Heart right ventricle (tissue), 16 donors: ENCODE measurements at regions of chr2 and their contacts with region 1.

Region 1: GRCh38 chr2:102005989-102006885 is 14.5 kb downstream of the IL1R2 start:
- DNase-seq: peak in 1 of 2 donors; percentile 51
- ATAC-seq: peak; percentile 39 to 82 (median 72)
- H3K4me3 ChIP-seq: no peak overlapping the region
- H3K27ac ChIP-seq: peak overlapping the region in 1 of 10 donors; percentile 15
- H3K4me1 ChIP-seq: peaks cover 0 to 39% (median 4%) of the 10 kb centered on the region in 9 donors
- H3K27me3 ChIP-seq: no peaks in the 10 kb centered on the region
- CTCF ChIP-seq: peak; percentile 36 to 77 (median 68)

Region 2: GRCh38 chr2:100902833-100903405 is 1103.3 kb before region 1 on chr2:
- intact Hi-C with region 1: no loop called
- DNase-seq: no peak
- ATAC-seq: peak in 5 of 8 donors; percentile 35 to 59 (median 35)
- H3K4me3 ChIP-seq: no peak overlapping the region
- H3K27ac ChIP-seq: peak overlapping the region in 2 of 10 donors; percentile 47 to 83
- H3K4me1 ChIP-seq: peaks cover 12 to 53% (median 27%) of the 10 kb centered on the region in 9 donors
- H3K27me3 ChIP-seq: no peaks in the 10 kb centered on the region
- CTCF ChIP-seq: peak in 1 of 9 donors; percentile 4

Region 3: GRCh38 chr2:102342891-102343290 is 336.7 kb after region 1 on chr2:
- intact Hi-C with region 1: loop called in 1 of 10 experiments (anchors 10 kb)
- DNase-seq: no peak
- ATAC-seq: no peak
- H3K4me3 ChIP-seq: no peak overlapping the region
- H3K27ac ChIP-seq: no peak overlapping the region
- H3K4me1 ChIP-seq: peaks cover 0 to 4% (median 0%) of the 10 kb centered on the region in 9 donors
- H3K27me3 ChIP-seq: peaks cover 0 to 11% (median 0%) of the 10 kb centered on the region in 7 donors
- CTCF ChIP-seq: peak in 4 of 9 donors; percentile 9 to 44 (median 21)

Region 4: DNA sequence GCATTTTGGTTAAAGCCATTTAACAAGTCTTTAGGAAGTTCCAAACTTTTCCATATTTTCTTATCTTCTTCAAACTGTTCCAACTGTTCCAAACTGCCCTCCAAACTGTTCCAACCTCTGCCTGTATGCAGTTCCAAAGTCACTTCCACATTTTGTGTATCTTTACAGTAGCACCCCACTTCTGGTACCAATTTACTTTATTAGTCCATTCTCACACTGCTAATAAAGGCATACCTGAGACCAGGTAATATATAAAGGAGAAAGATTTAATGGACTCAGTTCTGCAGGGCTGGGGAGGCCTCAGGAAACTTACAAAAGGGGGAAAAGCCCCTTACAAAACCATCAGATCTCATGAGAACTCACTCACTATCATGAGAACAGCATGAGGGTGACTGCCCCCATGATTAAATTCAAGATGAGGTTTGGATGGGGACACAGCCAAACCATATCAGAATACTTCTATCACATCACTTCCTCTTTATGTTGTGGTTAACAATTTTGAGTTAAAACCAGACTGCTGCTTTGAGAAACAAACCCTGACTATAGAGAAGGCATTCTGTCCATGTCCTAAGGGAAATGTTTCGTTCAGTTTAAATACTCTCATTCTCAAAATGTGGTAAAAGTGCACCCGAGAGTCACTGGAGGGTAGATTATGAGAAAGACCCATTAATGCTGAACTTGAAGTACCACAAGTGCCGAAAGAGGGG is 360.3 kb after region 1 on chr2:
- intact Hi-C with region 1: loop called in 1 of 10 experiments (anchors 10 kb)
- DNase-seq: no peak
- ATAC-seq: no peak
- H3K4me3 ChIP-seq: no peak overlapping the region
- H3K27ac ChIP-seq: peak overlapping the region in 1 of 10 donors; percentile 48
- H3K4me1 ChIP-seq: peaks cover 0 to 5% (median 0%) of the 10 kb centered on the region in 9 donors
- H3K27me3 ChIP-seq: no peaks in the 10 kb centered on the region
- CTCF ChIP-seq: no peak

Region 5: GRCh38 chr2:102449370-102449974 is 443.2 kb after region 1 on chr2:
- intact Hi-C with region 1: loop called in 6 of 10 experiments (anchors 5 to 10 kb)
- DNase-seq: peak; percentile 13 to 17
- ATAC-seq: no peak
- H3K4me3 ChIP-seq: no peak overlapping the region
- H3K27ac ChIP-seq: no peak overlapping the region
- H3K4me1 ChIP-seq: no peaks in the 10 kb centered on the region
- H3K27me3 ChIP-seq: no peaks in the 10 kb centered on the region
- CTCF ChIP-seq: peak in 8 of 9 donors; percentile 27 to 77 (median 68)